SK-N-SH (cell line): ENCODE measurements at regions of chr9 and their contacts with region 1.

Region 1: GRCh38 chr9:70602321-70603019 is 188.0 kb upstream of the KLF9 start:
- DNase-seq: peak; percentile 66
- H3K4me3 ChIP-seq: peak overlapping the region in 1 of 2 experiments; percentile 14; a peak in 1 of 4 replicates
- H3K27ac ChIP-seq: peak overlapping the region; percentile 48 to 90
- H3K4me1 ChIP-seq: peaks cover 15 to 19% of the 10 kb centered on the region in 2 experiments
- H3K27me3 ChIP-seq: no peaks in the 10 kb centered on the region
- CTCF ChIP-seq: peak; percentile 85
- EP300 ChIP-seq: no peak
- RAD21 ChIP-seq: peak; percentile 98

Region 2: DNA sequence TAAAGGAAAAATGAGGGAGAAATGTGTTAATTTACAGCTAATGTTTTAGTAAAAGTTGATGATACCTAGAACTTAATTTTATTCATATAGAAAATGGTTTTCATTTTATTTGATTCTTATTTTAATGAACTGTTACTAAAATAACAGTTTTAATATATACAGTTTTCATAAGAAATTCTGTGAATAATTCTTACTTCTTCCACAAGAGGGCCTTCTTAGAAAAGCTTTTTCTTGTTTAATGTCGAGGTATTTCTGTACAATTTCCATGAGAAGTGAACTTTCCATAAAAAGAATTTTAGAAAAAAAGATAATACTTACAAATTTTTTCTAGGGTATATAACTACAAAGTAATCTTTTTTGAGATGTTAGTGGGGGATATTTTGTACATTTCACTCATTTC is 261.9 kb before region 1 on chr9:
- CTCF ChIA-PET with region 1: interaction called, 69 read pairs
- POLR2A ChIA-PET with region 1: no interaction called
- DNase-seq: peak; percentile 5
- H3K4me3 ChIP-seq: no peak overlapping the region
- H3K27ac ChIP-seq: peak overlapping the region in 1 of 2 experiments; percentile 40; a peak in 1 of 4 replicates
- H3K4me1 ChIP-seq: no peaks in the 10 kb centered on the region; a peak in 1 of 4 replicates
- H3K27me3 ChIP-seq: no peaks in the 10 kb centered on the region
- CTCF ChIP-seq: peak; percentile 71
- EP300 ChIP-seq: no peak
- RAD21 ChIP-seq: peak; percentile 67

Region 3: GRCh38 chr9:70352802-70353201 is 249.7 kb before region 1 on chr9:
- CTCF ChIA-PET with region 1: interaction called, 15 read pairs
- POLR2A ChIA-PET with region 1: no interaction called
- DNase-seq: no peak
- H3K4me3 ChIP-seq: no peak overlapping the region
- H3K27ac ChIP-seq: 0 out of 4 replicates have a peak overlapping the region, but pooled peaks of 1 of the 2 experiments have one; percentile 0
- H3K4me1 ChIP-seq: no peaks in the 10 kb centered on the region
- H3K27me3 ChIP-seq: no peaks in the 10 kb centered on the region
- CTCF ChIP-seq: peak; percentile 55
- EP300 ChIP-seq: no peak
- RAD21 ChIP-seq: peak; percentile 69

Region 4: GRCh38 chr9:70420267-70421019 is 182.0 kb before region 1 on chr9:
- CTCF ChIA-PET with region 1: interaction called, 11 read pairs
- POLR2A ChIA-PET with region 1: interaction called, 20 read pairs
- DNase-seq: peak; percentile 78
- H3K4me3 ChIP-seq: peak overlapping the region; percentile 59 to 73
- H3K27ac ChIP-seq: peak overlapping the region; percentile 99 to 100
- H3K4me1 ChIP-seq: peaks cover 15 to 21% of the 10 kb centered on the region in 2 experiments
- H3K27me3 ChIP-seq: no peaks in the 10 kb centered on the region
- CTCF ChIP-seq: no peak
- EP300 ChIP-seq: peak in 1 of 2 experiments; percentile 22; a peak in 1 of 4 replicates
- RAD21 ChIP-seq: no peak

Region 5: DNA sequence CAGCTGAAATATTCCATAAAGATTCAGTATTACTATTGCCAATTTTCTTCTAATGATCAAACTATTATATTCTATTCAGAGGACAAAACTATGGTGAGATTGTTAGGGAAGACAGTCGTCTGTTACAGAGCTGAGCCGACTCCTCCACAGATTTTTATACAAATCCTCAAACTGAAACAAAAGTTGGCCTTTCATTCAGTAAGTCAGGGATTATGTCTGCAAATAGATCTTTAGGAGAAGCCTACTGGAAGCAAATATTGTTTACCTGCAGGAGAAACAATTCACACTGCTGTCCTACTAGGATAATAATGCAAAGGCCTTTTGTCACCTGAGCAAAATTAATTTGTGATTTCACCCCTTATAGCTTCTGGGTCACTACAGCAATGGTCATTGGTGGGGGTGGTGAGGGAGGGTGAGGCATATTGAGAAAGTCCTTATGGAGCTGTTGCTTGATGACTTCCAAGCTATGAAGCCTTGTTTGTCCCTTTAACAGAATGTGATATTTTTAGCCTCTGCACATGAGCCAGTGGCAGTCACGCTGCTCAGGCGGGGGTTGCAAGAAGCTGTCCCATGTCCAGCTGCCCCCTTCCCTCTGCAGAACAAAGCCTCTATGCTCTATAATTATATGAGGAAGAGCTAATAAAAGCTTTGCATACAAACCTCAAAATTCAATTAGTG is 12.5 kb after region 1 on chr9:
- CTCF ChIA-PET with region 1: interaction called, 41 read pairs
- POLR2A ChIA-PET with region 1: no interaction called
- DNase-seq: no peak
- H3K4me3 ChIP-seq: no peak overlapping the region; a peak in 1 of 4 replicates
- H3K27ac ChIP-seq: no peak overlapping the region; a peak in 1 of 4 replicates
- H3K4me1 ChIP-seq: peaks cover 0 to 7% of the 10 kb centered on the region in 2 experiments; a peak in 2 of 4 replicates
- H3K27me3 ChIP-seq: no peaks in the 10 kb centered on the region
- CTCF ChIP-seq: no peak
- EP300 ChIP-seq: no peak
- RAD21 ChIP-seq: no peak